Endothelial cell of umbilical vein (primary cell): ENCODE measurements at regions of chr16 and their contacts with region 1.

Region 1: GRCh38 chr16:3983081-3983520 is 102.6 kb upstream of the CREBBP start:
- DNase-seq: peak; percentile 72
- H3K4me3 ChIP-seq: no peak overlapping the region
- H3K27ac ChIP-seq: no peak overlapping the region
- H3K4me1 ChIP-seq: no peaks in the 10 kb centered on the region
- H3K27me3 ChIP-seq: no peaks in the 10 kb centered on the region
- CTCF ChIP-seq: peak; percentile 71 to 90
- POLR2A ChIP-seq: no peak

Region 2: DNA sequence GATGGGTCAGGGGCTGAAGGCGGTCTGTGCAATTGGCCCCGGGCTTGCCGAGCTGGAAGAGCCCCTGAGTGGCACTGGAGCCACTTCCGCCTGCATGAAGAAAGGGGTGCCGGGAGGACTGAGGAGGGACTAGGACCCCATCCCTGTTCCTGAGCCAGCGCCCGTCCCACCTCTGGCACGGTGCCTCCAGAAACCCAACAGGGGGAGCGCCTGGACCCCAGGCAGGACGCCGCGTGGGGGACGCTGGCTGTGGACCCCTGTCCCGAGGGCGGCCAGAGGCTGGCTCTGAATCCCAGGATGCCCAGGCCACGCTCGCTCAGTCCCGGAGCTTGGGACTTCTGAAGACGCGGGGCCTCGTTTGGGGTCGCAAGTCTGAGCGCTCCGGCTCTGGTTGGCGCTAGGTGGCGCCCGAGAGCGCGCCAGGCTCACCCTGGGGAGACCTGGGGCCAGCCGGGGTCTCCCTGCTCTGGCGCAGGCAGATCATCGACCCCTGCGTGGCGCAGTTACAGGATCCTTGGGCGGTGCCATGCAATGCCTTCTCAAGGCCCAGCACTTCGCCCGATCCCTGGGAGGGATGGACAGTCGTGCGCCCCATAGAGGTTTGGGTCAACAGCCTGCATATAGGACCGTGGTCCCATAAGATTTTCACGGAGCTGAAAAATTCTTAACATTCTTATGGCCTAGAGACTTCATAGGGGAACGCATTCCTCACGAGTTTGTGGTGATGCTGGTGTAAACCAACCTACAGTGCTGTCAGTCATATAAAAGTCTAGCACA is 44.1 kb before region 1 on chr16:
- CTCF ChIA-PET with region 1: interaction called, 30 read pairs
- POLR2A ChIA-PET with region 1: no interaction called
- dilution Hi-C with region 1: no loop called
- intact Hi-C with region 1: no loop called
- DNase-seq: peak; percentile 55
- H3K4me3 ChIP-seq: peak overlapping the region in 1 of 3 experiments; percentile 29
- H3K27ac ChIP-seq: no peak overlapping the region
- H3K4me1 ChIP-seq: peaks cover 3% of the 10 kb centered on the region
- H3K27me3 ChIP-seq: peaks cover 0 to 2% of the 10 kb centered on the region in 2 experiments
- CTCF ChIP-seq: peak; percentile 90 to 97
- POLR2A ChIP-seq: no peak

Region 3: DNA sequence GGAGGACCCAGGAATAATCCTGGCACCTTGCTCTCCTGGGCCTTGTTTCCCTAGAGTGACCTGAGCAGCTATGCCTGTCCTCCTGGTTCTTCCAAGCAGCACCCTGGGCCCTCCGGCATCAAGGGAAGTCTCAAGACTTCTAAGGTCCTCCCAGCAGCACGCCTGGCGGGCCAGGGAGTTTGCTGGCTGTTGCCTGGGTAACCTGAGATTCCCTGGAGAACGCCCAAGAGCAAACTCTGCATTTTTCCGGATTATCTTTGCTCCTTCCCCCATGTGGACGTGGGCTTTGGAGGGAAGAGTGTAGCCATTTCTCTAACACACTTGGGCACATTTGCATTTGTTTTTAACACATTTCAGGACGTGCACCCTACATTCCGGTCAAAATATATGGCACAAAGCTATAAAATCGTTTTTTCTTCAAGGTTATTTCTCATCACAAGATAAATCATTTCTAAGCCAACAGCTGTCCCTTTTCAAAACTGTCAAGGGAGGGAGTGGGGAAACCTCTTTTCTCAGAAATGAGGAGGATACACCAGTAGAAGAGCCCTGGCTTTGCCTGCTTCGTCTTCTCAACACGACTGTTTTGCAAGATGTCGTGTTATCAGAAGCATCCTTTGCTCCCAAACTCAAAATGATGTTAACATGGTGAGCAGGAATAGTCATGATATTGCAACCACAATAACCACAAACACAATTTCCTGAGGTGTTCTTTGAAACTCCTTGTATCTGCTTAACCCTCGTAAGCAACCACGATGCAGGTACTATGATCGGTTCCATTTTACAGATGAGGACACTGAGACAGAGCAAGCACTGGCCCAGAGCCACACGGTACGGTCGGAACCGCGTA is 16.6 kb after region 1 on chr16:
- CTCF ChIA-PET with region 1: interaction called, 14 read pairs
- POLR2A ChIA-PET with region 1: no interaction called
- dilution Hi-C with region 1: no loop called
- intact Hi-C with region 1: no loop called
- DNase-seq: no peak
- H3K4me3 ChIP-seq: no peak overlapping the region
- H3K27ac ChIP-seq: no peak overlapping the region
- H3K4me1 ChIP-seq: no peaks in the 10 kb centered on the region
- H3K27me3 ChIP-seq: no peaks in the 10 kb centered on the region
- CTCF ChIP-seq: no peak
- POLR2A ChIP-seq: no peak

Region 4: GRCh38 chr16:4011225-4011939 is 28.3 kb after region 1 on chr16:
- CTCF ChIA-PET with region 1: interaction called, 13 read pairs
- POLR2A ChIA-PET with region 1: no interaction called
- dilution Hi-C with region 1: no loop called
- intact Hi-C with region 1: no loop called
- DNase-seq: peak; percentile 65
- H3K4me3 ChIP-seq: no peak overlapping the region
- H3K27ac ChIP-seq: peak overlapping the region; percentile 19
- H3K4me1 ChIP-seq: peaks cover 32% of the 10 kb centered on the region
- H3K27me3 ChIP-seq: no peaks in the 10 kb centered on the region
- CTCF ChIP-seq: no peak
- POLR2A ChIP-seq: no peak

Region 5: DNA sequence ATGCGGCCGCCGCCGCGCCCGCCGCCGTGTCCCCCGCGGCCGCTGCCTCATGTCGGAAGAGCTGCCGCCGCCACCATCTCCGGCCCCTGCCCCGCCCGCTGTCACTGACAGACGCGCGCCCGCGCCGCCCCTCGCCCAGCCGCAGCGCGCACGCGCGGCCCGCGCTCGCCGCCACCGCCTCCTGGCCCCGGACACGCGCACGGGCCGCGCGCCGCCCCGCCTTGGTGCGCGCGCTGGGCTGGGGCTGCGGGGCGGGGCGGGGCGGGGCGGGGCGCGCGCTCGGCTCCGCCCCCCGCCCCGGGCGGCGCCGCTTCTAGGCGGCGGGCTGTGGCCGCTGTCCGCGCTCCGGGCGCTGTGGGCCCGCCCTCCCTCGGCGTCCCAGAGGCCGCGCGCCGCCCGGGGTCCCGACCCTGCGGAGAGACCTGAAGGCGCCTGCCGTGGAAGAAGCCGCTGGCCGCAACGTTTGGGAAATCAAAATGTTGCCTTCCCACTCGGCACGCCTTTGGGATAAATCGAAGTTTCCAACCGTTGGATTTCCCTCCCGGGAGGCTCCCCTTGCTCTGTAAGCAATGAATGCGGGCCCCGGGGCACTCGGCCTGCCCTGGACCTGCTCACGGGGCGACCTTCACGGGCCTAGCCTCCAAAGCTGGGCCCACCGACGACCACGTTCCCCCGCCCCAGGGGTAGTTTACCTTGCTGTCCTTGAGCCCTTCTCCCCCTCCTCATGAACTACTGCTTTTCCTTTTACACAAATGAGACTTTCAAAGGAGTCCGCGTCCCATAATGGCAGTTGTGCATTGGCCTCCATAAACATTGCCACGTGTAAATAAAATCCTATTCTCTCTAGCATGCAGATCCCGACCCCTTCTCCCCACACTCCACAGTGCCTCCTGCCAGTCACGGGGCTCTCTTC is 133.5 kb after region 1 on chr16 and contains the start of gene ADCY9:
- CTCF ChIA-PET with region 1: interaction called, 33 read pairs
- POLR2A ChIA-PET with region 1: no interaction called
- dilution Hi-C with region 1: no loop called
- intact Hi-C with region 1: no loop called
- DNase-seq: peak; percentile 47
- H3K4me3 ChIP-seq: peak within 1 kb of the TSS; percentile 33 to 67 (median 42)
- H3K27ac ChIP-seq: peak within 1 kb of the TSS; percentile 15
- H3K4me1 ChIP-seq: peaks cover 17% of the 10 kb centered on the region
- H3K27me3 ChIP-seq: no peaks in the 10 kb centered on the region
- CTCF ChIP-seq: no peak
- POLR2A ChIP-seq: peak; percentile 47
- total RNA-seq, gene ADCY9: 13.1 and 14.0 TPM in 2 replicates

Region 6: GRCh38 chr16:4176612-4177417 is 193.7 kb after region 1 on chr16:
- CTCF ChIA-PET with region 1: interaction called, 12 read pairs
- POLR2A ChIA-PET with region 1: no interaction called
- dilution Hi-C with region 1: no loop called
- intact Hi-C with region 1: no loop called
- DNase-seq: no peak
- H3K4me3 ChIP-seq: no peak overlapping the region
- H3K27ac ChIP-seq: no peak overlapping the region
- H3K4me1 ChIP-seq: no peaks in the 10 kb centered on the region
- H3K27me3 ChIP-seq: no peaks in the 10 kb centered on the region
- CTCF ChIP-seq: no peak
- POLR2A ChIP-seq: no peak

Region 7: GRCh38 chr16:4200000-4200780 is 217.1 kb after region 1 on chr16:
- CTCF ChIA-PET with region 1: interaction called, 20 read pairs
- POLR2A ChIA-PET with region 1: no interaction called
- dilution Hi-C with region 1: no loop called
- intact Hi-C with region 1: no loop called
- DNase-seq: peak; percentile 62
- H3K4me3 ChIP-seq: no peak overlapping the region
- H3K27ac ChIP-seq: no peak overlapping the region
- H3K4me1 ChIP-seq: no peaks in the 10 kb centered on the region
- H3K27me3 ChIP-seq: no peaks in the 10 kb centered on the region
- CTCF ChIP-seq: peak; percentile 46 to 83
- POLR2A ChIP-seq: no peak